Left cardiac atrium (tissue), 4 donors: ENCODE measurements at regions of chr1 and their contacts with region 1.

Region 1: DNA sequence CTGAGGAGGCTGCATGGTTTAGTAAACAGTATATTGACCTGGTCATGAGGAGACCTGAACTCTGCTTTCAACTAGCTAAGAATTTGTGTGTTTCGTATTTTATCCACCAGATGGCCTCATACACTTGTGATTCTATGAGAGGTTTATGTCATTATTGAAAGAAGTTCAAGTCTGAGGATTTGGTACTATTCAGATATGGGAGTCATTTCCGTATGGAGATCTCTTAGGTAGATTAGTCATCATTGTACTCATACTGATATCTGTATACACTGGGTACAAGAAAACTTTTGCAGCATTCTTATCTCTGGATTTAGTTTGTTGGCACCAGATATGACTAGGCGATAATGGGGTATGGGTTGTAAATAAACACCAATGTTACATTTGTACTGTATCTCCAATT is 26.6 kb downstream of the ATF6 start:
- DNase-seq: no peak
- ATAC-seq: peak in 1 of 2 donors; percentile 58

Region 2: DNA sequence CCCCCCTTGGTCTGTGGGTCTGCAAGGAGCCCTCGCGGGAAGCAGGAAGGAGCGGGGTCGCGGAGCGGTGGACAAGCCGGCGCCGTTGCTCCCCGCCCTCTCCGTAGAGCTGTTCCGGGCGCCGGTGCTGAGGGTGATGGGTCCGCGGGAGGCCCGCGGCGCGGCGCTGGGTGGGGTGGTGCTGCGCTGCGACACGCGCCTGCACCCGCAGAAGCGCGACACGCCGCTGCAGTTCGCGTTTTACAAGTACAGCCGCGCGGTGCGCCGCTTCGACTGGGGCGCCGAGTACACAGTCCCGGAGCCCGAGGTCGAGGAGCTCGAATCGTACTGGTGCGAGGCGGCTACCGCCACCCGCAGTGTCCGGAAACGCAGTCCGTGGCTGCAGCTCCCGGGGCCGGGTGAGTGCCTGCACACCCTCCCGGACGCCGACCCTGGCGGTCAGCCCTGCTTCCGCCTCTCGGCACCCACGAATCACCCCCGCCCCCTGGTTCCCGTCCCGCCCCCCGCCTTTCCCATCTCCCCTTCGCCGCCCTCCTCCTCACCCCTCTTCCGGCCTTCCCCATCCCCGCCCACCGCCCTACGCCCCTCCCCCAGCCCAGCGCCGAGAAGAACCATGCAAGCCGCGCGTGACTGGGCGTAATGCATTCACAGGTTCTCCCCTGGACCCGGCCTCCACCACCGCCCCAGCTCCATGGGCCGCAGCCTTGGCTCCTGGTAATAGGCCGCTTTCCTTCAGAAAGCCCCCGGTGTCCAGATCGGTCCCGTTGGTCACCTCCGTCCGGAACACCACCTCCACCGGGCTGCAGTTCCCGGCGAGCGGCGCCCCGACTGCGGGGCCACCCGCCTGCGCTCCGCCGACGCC is 65.9 kb before region 1 on chr1:
- intact Hi-C with region 1: no loop called
- DNase-seq: peak; percentile 87
- ATAC-seq: peak; percentile 93 to 95

Region 3: GRCh38 chr1:162035241-162035640 is 242.5 kb after region 1 on chr1:
- intact Hi-C with region 1: loop called (anchors 1 to 5 kb)
- DNase-seq: no peak
- ATAC-seq: no peak